MCF 10A (cell line): ENCODE measurements at regions of chr17 and their contacts with region 1.

Region 1: GRCh38 chr17:7589204-7589868 is 558 bp downstream of the SOX15 start:
- DNase-seq: peak; percentile 92
- H3K4me3 Mint-ChIP-seq: peak overlapping the region; percentile 76
- H3K27ac Mint-ChIP-seq: peak overlapping the region; percentile 78
- H3K4me1 Mint-ChIP-seq: peaks cover 42% of the 10 kb centered on the region
- H3K27me3 Mint-ChIP-seq: no peaks in the 10 kb centered on the region
- CTCF ChIP-seq: peak; percentile 88

Region 2: GRCh38 chr17:7515911-7516610 is 73.3 kb before region 1 on chr17:
- CTCF ChIA-PET with region 1: interaction called, 10 read pairs
- POLR2A ChIA-PET with region 1: interaction called, 3 read pairs
- intact Hi-C with region 1: loop called (anchors 2 kb)
- DNase-seq: no peak
- H3K4me3 Mint-ChIP-seq: no peak overlapping the region
- H3K27ac Mint-ChIP-seq: no peak overlapping the region
- H3K4me1 Mint-ChIP-seq: no peaks in the 10 kb centered on the region
- H3K27me3 Mint-ChIP-seq: no peaks in the 10 kb centered on the region
- CTCF ChIP-seq: no peak

Region 3: GRCh38 chr17:7572588-7573323 is 16.6 kb before region 1 on chr17:
- CTCF ChIA-PET with region 1: interaction called, 59 read pairs
- POLR2A ChIA-PET with region 1: interaction called, 294 read pairs
- intact Hi-C with region 1: loop called (anchors 1 kb)
- DNase-seq: peak; percentile 99
- H3K4me3 Mint-ChIP-seq: peak overlapping the region; percentile 90
- H3K27ac Mint-ChIP-seq: peak overlapping the region; percentile 99
- H3K4me1 Mint-ChIP-seq: peaks cover 11% of the 10 kb centered on the region
- H3K27me3 Mint-ChIP-seq: no peaks in the 10 kb centered on the region
- CTCF ChIP-seq: no peak

Region 4: DNA sequence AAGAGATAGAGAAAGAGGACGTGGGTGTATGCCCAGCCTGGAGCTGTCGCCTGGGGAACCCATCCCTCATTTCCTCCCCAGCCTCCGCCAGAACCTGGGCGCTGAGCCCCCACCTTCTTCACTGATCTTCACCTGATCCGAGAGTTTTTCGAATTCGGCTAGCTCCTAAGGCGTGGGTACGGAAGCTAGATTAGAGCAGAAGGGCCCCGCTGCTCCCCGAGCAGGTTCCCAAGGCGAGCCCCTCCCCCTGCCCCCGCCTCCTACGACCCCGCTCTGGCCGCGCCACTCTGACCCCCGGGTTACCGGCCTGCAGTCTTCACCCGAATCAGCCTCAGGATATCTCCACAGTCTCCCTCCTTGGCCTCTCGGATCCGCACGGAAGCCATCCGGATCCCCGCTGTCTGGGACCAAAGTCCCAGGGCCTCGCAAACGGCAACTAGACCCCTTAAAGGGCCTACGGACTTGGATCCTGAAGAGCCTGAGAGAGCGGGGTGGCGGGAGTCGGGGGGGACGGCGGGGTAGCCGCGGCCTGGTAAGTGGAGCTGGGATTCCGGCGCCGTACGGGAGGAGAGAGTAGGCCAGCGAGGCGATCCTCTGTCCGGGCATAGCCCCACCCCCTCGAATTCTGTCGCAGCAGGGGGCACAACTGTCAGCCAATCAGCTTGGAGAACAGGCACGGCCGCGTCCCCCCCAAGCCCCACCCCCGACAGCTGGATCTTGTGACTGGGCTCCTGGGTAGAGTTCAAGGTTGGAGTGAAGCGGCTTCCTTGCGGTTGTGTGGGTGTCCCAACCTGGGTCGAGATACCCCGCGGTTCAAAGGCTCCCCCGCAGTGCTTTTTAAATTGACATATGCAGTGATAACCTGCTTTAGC is 38.1 kb after region 1 on chr17 and contains the start of gene SAT2:
- CTCF ChIA-PET with region 1: interaction called, 5 read pairs
- POLR2A ChIA-PET with region 1: interaction called, 51 read pairs
- intact Hi-C with region 1: no loop called
- DNase-seq: peak; percentile 95
- H3K4me3 Mint-ChIP-seq: peak within 1 kb of the TSS; percentile 84
- H3K27ac Mint-ChIP-seq: peak within 1 kb of the TSS; percentile 93
- H3K4me1 Mint-ChIP-seq: no peaks in the 10 kb centered on the region
- H3K27me3 Mint-ChIP-seq: no peaks in the 10 kb centered on the region
- CTCF ChIP-seq: no peak
- total RNA-seq, gene SAT2: 66.8 and 82.7 TPM in 2 replicates